ENCODE measurements at regions of chr7 and their contacts with region 1.

Region 1: GRCh38 chr7:30791114-30791779 is 20.0 kb downstream of the MINDY4 start:
- DNase-seq: peak in 1 of 2 experiments; percentile 54
- H3K4me3 ChIP-seq: no peak overlapping the region
- H3K27ac ChIP-seq: no peak overlapping the region
- H3K4me1 ChIP-seq: 0 out of 7 replicates have a peak, but pooled peaks cover 0 to 3% (median 0%) of the 10 kb centered on the region in 4 experiments
- H3K27me3 ChIP-seq: no peaks in the 10 kb centered on the region
- CTCF ChIP-seq: peak; percentile 56 to 66 (median 60)
- EP300 ChIP-seq: no peak
- POLR2A ChIP-seq: no peak
- RAD21 ChIP-seq: peak; percentile 42 to 58; a peak in 3 of 4 replicates

Region 2: DNA sequence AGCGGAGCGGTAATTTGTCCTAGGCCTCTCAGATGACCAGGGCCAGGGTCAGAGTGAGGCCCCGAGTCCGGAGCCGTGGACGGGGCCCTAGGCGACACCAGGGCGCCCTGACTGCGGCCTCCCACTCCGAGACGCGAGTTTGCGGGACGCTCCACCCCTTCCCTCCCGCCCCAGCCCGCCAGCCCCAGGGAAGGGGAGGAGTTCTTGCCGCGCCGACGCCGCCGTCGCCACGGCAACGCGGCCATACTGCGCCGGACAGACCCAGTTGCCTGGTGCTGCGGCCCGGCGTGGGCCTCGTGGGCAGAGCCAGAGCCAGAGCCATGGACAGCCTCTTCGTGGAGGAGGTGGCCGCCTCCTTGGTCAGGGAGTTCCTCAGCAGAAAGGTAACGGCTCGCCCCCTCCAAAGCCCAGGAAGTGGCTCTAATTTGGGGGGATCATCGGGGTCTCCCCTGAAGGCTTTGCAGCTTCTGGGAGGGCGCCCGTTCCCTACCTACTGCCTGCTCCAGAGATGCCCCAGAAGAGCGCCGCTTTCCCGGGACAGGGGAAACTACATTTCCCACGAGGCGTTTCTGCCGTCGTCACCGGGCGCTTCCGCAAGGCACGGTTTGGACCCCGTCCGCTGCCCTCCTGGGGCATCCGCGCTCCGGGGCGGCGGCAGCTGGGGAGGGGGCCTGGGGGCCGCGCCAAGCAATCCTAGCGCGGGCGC is 19.9 kb before region 1 on chr7 and contains the start of gene MINDY4:
- CTCF ChIA-PET with region 1: interaction called, 17 read pairs
- POLR2A ChIA-PET with region 1: interaction called, 3 read pairs
- DNase-seq: peak; percentile 36 to 86
- H3K4me3 ChIP-seq: peak within 1 kb of the TSS; percentile 50 to 93 (median 74)
- H3K27ac ChIP-seq: no peak within 1 kb of the TSS
- H3K4me1 ChIP-seq: peaks cover 0 to 2% (median under 1%) of the 10 kb centered on the region in 4 experiments; a peak in 5 of 7 replicates
- H3K27me3 ChIP-seq: no peaks in the 10 kb centered on the region
- CTCF ChIP-seq: no peak
- EP300 ChIP-seq: no peak
- POLR2A ChIP-seq: peak in 1 of 2 experiments; percentile 72; a peak in 2 of 3 replicates
- RAD21 ChIP-seq: no peak
- total RNA-seq, gene MINDY4: 3.6 and 3.8 TPM in 2 replicates

Region 3: DNA sequence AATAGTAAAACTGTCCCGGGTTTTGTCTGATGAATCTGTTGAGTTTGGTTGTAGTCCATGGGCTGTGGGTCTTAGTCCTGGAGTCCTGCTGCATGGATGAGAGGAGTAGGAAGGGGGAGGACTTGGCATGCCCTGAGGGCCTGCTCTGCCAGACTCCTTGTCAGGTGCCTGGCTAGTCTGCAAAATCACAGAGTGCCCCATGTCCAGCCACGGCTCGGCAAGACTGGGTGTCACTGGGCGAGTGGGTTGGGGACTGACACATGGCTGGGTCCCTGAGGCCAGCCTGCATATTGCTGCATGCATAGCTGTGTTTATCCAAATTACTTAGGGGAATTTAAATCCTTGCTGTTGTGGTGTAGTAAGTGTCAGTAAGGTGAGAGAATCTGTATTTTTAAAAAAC is 10.3 kb before region 1 on chr7:
- CTCF ChIA-PET with region 1: interaction called, 11 read pairs
- POLR2A ChIA-PET with region 1: no interaction called
- DNase-seq: no peak
- H3K4me3 ChIP-seq: no peak overlapping the region
- H3K27ac ChIP-seq: no peak overlapping the region
- H3K4me1 ChIP-seq: no peaks in the 10 kb centered on the region
- H3K27me3 ChIP-seq: no peaks in the 10 kb centered on the region
- CTCF ChIP-seq: no peak
- EP300 ChIP-seq: no peak
- POLR2A ChIP-seq: no peak
- RAD21 ChIP-seq: no peak

Measured in H1 (cell line).